GM13976 (cell line): ENCODE measurements at regions of chr2 and their contacts with region 1.

Region 1: GRCh38 chr2:222561817-222562645 is 93.9 kb downstream of the FARSB start:
- DNase-seq: peak; percentile 77
- CTCF ChIP-seq: peak; percentile 59

Region 2: DNA sequence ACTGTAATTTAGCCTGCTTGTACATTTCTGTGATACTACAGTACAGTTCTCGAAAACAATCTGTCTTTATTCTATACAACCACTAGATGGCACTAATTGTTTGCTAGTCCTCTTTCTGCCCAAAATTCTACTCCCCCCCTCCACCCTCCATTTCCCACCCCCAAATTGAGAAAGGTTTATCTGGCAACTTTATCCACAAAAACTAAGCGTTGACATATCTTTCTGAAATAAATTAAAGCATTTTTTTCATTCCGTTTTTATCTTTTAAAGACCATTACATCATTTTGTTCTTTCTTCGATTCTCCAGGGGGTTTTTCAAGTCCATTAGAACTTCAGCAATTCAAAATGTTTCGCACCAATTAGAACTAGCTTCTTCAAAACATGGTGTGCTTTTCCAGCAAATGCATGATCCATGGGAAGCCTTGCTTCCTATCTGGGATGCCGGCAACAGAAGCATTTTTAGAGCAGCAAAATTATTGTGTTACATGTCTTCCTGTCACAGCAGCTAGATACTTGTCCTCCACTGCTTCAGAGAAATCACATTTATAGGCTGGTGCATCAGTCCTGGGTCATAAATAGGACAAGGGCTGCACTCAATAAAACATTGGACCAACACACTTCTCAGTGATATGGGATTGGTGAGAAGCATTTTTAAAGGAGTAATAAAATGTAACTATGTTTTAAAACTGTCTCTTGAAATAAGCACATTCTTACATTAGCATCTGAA is 504.5 kb before region 1 on chr2:
- in situ Hi-C with region 1: loop called (anchors 25 kb)
- DNase-seq: peak; percentile 58
- CTCF ChIP-seq: peak; percentile 35

Region 3: GRCh38 chr2:222613715-222614331 is 51.8 kb after region 1 on chr2:
- in situ Hi-C with region 1: no loop called
- DNase-seq: peak; percentile 73
- CTCF ChIP-seq: peak; percentile 46